ENCODE measurements at regions of chr1 and their contacts with region 1.

Region 1: GRCh38 chr1:247390116-247390791 is 25.7 kb upstream of the NLRP3 start:
- DNase-seq: peak; percentile 71
- H3K4me3 ChIP-seq: no peak overlapping the region
- H3K27ac ChIP-seq: no peak overlapping the region
- H3K4me1 ChIP-seq: no peaks in the 10 kb centered on the region
- H3K27me3 ChIP-seq: no peaks in the 10 kb centered on the region
- CTCF ChIP-seq: peak; percentile 73 to 84
- POLR2A ChIP-seq: no peak

Region 2: GRCh38 chr1:247407180-247407616 is 16.9 kb after region 1 on chr1:
- CTCF ChIA-PET with region 1: no interaction called
- POLR2A ChIA-PET with region 1: no interaction called
- dilution Hi-C with region 1: no loop called
- intact Hi-C with region 1: no loop called
- DNase-seq: no peak
- H3K4me3 ChIP-seq: no peak overlapping the region
- H3K27ac ChIP-seq: no peak overlapping the region
- H3K4me1 ChIP-seq: no peaks in the 10 kb centered on the region
- H3K27me3 ChIP-seq: no peaks in the 10 kb centered on the region
- CTCF ChIP-seq: no peak
- POLR2A ChIP-seq: no peak

Region 3: GRCh38 chr1:247487057-247487456 is 96.8 kb after region 1 on chr1:
- CTCF ChIA-PET with region 1: interaction called, 5 read pairs
- POLR2A ChIA-PET with region 1: no interaction called
- dilution Hi-C with region 1: no loop called
- intact Hi-C with region 1: loop called (anchors 1 kb)
- DNase-seq: peak; percentile 10
- H3K4me3 ChIP-seq: no peak overlapping the region
- H3K27ac ChIP-seq: no peak overlapping the region
- H3K4me1 ChIP-seq: no peaks in the 10 kb centered on the region
- H3K27me3 ChIP-seq: no peaks in the 10 kb centered on the region
- CTCF ChIP-seq: peak in 1 of 2 donors; percentile 15
- POLR2A ChIP-seq: no peak

Region 4: GRCh38 chr1:247576495-247576894 is 186.2 kb after region 1 on chr1:
- CTCF ChIA-PET with region 1: no interaction called
- POLR2A ChIA-PET with region 1: no interaction called
- dilution Hi-C with region 1: no loop called
- intact Hi-C with region 1: loop called (anchors 1 kb)
- DNase-seq: no peak
- H3K4me3 ChIP-seq: no peak overlapping the region
- H3K27ac ChIP-seq: no peak overlapping the region
- H3K4me1 ChIP-seq: no peaks in the 10 kb centered on the region
- H3K27me3 ChIP-seq: no peaks in the 10 kb centered on the region
- CTCF ChIP-seq: no peak
- POLR2A ChIP-seq: no peak